CD8-positive, alpha-beta T cell (primary cell): ENCODE measurements at regions of chr19 and their contacts with region 1.

Region 1: GRCh38 chr19:10602330-10603083 is 15.4 kb upstream of the AP1M2 start:
- DNase-seq: peak; percentile 79 to 94 (median 86)
- ATAC-seq: peak; percentile 82
- H3K4me3 ChIP-seq: peak overlapping the region; percentile 91 to 99
- H3K4me3 Mint-ChIP-seq: peak overlapping the region; percentile 96
- H3K27ac ChIP-seq: peak overlapping the region; percentile 99 to 100
- H3K27ac Mint-ChIP-seq: peak overlapping the region; percentile 99
- H3K4me1 ChIP-seq: peaks cover 38% of the 10 kb centered on the region
- H3K4me1 Mint-ChIP-seq: peaks cover 29% of the 10 kb centered on the region
- H3K27me3 ChIP-seq: no peaks in the 10 kb centered on the region
- H3K27me3 Mint-ChIP-seq: no peaks in the 10 kb centered on the region
- CTCF ChIP-seq: no peak

Region 2: DNA sequence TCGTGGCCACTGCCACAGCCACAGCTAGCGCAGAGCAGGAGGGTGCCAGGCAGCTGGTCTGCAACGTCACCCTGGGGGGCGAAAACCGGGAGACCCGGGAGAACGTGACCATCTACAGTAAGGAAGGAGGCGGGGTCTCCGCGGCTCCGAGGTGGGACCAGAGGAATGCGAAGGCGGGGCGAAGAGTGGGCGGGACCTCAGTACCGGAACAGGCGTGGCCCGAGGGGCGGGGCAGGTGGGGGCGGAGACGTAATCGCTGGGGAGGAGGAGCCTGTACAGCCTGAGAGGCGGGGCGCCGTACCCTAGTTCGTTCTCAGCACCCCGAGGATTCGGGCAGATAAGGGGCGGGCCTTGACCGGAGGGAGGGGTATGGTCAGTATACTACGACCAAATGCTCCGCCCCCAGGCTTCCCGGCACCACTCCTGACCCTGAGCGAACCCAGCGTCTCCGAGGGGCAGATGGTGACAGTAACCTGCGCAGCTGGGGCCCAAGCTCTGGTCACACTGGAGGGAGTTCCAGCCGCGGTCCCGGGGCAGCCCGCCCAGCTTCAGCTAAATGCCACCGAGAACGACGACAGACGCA is 310.2 kb before region 1 on chr19:
- CTCF ChIA-PET with region 1: no interaction called
- POLR2A ChIA-PET with region 1: no interaction called
- intact Hi-C with region 1: loop called in 1 of 2 experiments (anchors 1 kb)
- DNase-seq: peak; percentile 41 to 79 (median 69)
- ATAC-seq: peak; percentile 45
- H3K4me3 ChIP-seq: peak overlapping the region; percentile 47 to 51
- H3K4me3 Mint-ChIP-seq: peak overlapping the region; percentile 80
- H3K27ac ChIP-seq: no peak overlapping the region
- H3K27ac Mint-ChIP-seq: no peak overlapping the region
- H3K4me1 ChIP-seq: peaks cover 79% of the 10 kb centered on the region
- H3K4me1 Mint-ChIP-seq: peaks cover 70% of the 10 kb centered on the region
- H3K27me3 ChIP-seq: peaks cover 58 to 78% of the 10 kb centered on the region in 2 experiments
- H3K27me3 Mint-ChIP-seq: peaks cover 59% of the 10 kb centered on the region
- CTCF ChIP-seq: no peak

Region 3: DNA sequence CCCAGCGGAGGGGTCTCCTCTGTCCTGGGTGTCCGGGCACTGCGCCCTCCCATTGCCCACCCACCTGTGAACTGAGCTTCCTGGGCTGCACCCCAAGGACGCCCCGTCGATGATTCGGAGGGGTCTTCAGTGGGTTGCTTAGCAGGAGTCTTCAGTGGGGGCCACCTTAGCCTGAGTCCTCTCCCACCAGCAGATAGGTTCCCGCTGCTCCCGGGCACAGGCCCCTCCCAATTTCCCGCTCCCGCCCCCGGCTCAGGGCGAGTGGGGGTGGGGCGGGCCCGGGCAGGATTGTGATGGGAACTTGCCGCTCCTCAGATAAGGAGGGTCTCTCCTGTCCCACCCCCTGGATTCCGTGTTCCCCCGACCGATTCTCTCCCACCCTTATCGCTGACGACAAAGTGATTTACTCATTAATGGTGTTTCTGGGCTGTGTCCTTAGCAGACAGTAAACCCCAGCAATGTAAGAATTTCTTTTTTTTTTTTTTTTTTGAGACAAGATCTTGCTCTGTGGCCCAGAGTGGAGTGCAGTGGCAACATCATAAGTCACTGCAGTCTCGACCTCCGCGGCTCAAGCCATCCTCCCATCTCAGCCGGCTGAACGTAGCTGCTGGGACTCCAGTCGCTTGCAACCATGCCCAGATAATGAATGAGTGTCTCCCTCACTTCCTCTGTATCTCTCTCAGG is 84.6 kb before region 1 on chr19:
- CTCF ChIA-PET with region 1: no interaction called
- POLR2A ChIA-PET with region 1: no interaction called
- intact Hi-C with region 1: no loop called
- DNase-seq: peak in 5 of 9 experiments; percentile 27 to 81 (median 59)
- ATAC-seq: peak; percentile 45
- H3K4me3 ChIP-seq: peak overlapping the region; percentile 49 to 67
- H3K4me3 Mint-ChIP-seq: peak overlapping the region; percentile 69
- H3K27ac ChIP-seq: peak overlapping the region; percentile 60 to 83
- H3K27ac Mint-ChIP-seq: peak overlapping the region; percentile 76
- H3K4me1 ChIP-seq: peaks cover 38% of the 10 kb centered on the region
- H3K4me1 Mint-ChIP-seq: peaks cover 44% of the 10 kb centered on the region
- H3K27me3 ChIP-seq: peaks cover 9 to 33% of the 10 kb centered on the region in 2 experiments
- H3K27me3 Mint-ChIP-seq: peaks cover 46% of the 10 kb centered on the region
- CTCF ChIP-seq: no peak

Region 4: GRCh38 chr19:10543420-10544241 is 58.9 kb before region 1 on chr19 and contains the start of gene ATG4D:
- CTCF ChIA-PET with region 1: no interaction called
- POLR2A ChIA-PET with region 1: no interaction called
- intact Hi-C with region 1: loop called in 1 of 2 experiments (anchors 2 kb)
- DNase-seq: peak; percentile 66 to 91 (median 84)
- ATAC-seq: peak; percentile 86
- H3K4me3 ChIP-seq: peak within 1 kb of the TSS; percentile 82 to 90
- H3K4me3 Mint-ChIP-seq: peak within 1 kb of the TSS; percentile 88
- H3K27ac ChIP-seq: peak within 1 kb of the TSS; percentile 63 to 66
- H3K27ac Mint-ChIP-seq: peak within 1 kb of the TSS; percentile 91
- H3K4me1 ChIP-seq: peaks cover 17% of the 10 kb centered on the region
- H3K4me1 Mint-ChIP-seq: peaks cover 19% of the 10 kb centered on the region
- H3K27me3 ChIP-seq: no peaks in the 10 kb centered on the region
- H3K27me3 Mint-ChIP-seq: peaks cover 7% of the 10 kb centered on the region
- CTCF ChIP-seq: no peak
- total RNA-seq, gene ATG4D: 82.0 to 91.1 TPM

Region 5: DNA sequence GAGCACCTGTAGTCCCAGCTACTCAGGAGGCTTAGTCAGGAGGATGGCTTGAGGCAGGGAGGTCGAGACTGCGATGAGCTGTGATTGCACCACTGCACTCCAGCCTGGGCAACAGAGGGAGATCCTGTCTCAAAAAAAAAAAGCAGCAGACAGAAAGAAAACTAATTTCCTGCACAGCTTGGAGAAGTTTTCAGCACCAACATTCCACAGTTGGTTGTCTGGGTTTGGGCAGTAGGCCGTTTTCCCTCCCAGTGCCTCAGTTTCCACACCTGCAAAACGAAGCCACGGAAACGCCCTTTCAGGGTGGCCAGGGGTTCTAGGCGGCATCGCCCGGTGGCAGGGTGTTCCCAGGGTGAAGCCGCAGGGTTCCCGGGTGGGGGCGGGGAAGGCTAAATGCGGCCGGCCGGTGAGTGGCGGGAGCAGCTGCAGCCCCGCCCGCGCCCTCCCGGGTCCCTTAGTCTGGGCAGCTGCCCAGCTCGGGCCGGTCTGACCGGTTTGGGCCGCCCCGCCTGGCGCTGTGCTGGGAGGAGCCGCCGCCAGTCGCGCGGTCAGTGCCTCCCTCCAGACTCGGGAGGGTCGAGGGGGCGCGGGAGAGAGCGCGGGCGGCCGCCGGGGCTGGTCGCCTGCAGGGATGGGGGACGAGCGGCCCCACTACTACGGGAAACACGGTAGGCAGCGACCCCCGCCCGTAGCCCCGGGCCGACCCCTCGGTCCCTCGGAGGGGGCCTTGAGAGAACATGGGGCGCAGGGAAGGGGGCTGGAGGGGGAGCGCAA is 22.7 kb after region 1 on chr19 and contains the start of gene SLC44A2:
- CTCF ChIA-PET with region 1: interaction called, 3 read pairs
- POLR2A ChIA-PET with region 1: interaction called, 5 read pairs
- intact Hi-C with region 1: loop called in 1 of 2 experiments (anchors 2 kb)
- DNase-seq: no peak
- ATAC-seq: no peak
- H3K4me3 ChIP-seq: no peak within 1 kb of the TSS
- H3K4me3 Mint-ChIP-seq: peak within 1 kb of the TSS; percentile 35
- H3K27ac ChIP-seq: peak within 1 kb of the TSS; percentile 24 to 58
- H3K27ac Mint-ChIP-seq: peak within 1 kb of the TSS; percentile 77
- H3K4me1 ChIP-seq: peaks cover 31% of the 10 kb centered on the region
- H3K4me1 Mint-ChIP-seq: peaks cover 40% of the 10 kb centered on the region
- H3K27me3 ChIP-seq: no peaks in the 10 kb centered on the region
- H3K27me3 Mint-ChIP-seq: no peaks in the 10 kb centered on the region
- CTCF ChIP-seq: no peak
- total RNA-seq, gene SLC44A2: 175 to 181 TPM